ENCODE measurements at regions of chr10 and their contacts with region 1.

Region 1: GRCh38 chr10:17228091-17228940 is at the start of gene VIM:
- DNase-seq: peak; percentile 66 to 95 (median 86)
- ATAC-seq: peak; percentile 26
- H3K4me3 ChIP-seq: peak within 1 kb of the TSS; percentile 94
- H3K4me3 Mint-ChIP-seq: peak within 1 kb of the TSS; percentile 86
- H3K27ac ChIP-seq: peak within 1 kb of the TSS; percentile 93 to 100
- H3K27ac Mint-ChIP-seq: peak within 1 kb of the TSS; percentile 98
- H3K4me1 ChIP-seq: peaks cover 42% of the 10 kb centered on the region
- H3K4me1 Mint-ChIP-seq: peaks cover 61% of the 10 kb centered on the region
- H3K27me3 ChIP-seq: no peaks in the 10 kb centered on the region
- H3K27me3 Mint-ChIP-seq: no peaks in the 10 kb centered on the region
- CTCF ChIP-seq: no peak
- total RNA-seq, gene VIM: 1,576 to 1,603 TPM

Region 2: DNA sequence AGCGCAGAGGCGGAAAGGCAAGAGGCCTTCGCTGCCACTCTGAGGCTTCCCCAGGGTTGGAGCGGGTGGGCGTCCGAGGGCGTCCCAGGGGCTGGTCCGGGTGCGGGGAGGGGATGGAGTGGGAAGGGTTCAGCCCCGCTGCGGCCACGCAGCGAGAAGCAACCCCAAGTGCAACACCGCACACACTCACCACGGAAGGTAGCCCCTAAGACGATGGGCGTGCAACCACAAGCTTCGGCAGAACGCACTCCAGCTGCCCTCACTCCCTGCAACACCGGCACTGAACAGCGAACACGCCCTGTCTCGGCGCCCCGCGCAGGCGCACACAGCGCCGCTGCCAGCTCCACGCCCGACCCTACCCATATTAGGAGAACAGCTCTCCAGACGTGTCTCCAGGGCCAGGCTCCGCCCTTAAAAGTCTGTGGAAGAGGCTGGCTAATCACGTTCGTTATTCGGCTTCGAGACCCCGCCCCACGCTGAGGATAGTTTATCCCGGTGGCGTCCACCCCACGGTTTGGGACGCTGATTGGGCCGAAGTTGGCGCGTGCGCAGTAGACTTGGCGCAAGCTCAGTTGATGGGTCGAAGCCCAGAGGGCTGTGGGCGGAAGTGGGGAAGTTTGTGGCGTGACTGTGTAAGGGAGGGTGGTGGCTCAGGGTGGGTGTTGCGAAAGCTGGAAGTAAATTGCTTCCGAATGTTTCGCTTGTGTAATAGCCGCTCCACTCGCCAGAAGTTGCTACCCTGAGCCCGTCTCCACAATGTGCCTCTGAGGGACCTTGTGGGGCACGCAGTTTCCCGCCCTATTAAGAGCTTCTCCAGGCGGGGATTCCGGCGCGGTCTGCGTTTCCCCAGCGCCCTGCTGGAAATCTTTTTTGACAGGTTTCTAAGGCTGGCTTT is 410.9 kb before region 1 on chr10 and contains the start of gene RSU1:
- CTCF ChIA-PET with region 1: no interaction called
- POLR2A ChIA-PET with region 1: interaction called, 57 read pairs
- intact Hi-C with region 1: loop called in 1 of 2 experiments (anchors 5 kb)
- DNase-seq: peak; percentile 99 to 100 (median 100)
- ATAC-seq: peak; percentile 96
- H3K4me3 ChIP-seq: peak within 1 kb of the TSS; percentile 78
- H3K4me3 Mint-ChIP-seq: peak within 1 kb of the TSS; percentile 97
- H3K27ac ChIP-seq: peak within 1 kb of the TSS; percentile 82 to 87
- H3K27ac Mint-ChIP-seq: peak within 1 kb of the TSS; percentile 92
- H3K4me1 ChIP-seq: peaks cover 32% of the 10 kb centered on the region
- H3K4me1 Mint-ChIP-seq: peaks cover 50% of the 10 kb centered on the region
- H3K27me3 ChIP-seq: no peaks in the 10 kb centered on the region
- H3K27me3 Mint-ChIP-seq: no peaks in the 10 kb centered on the region
- CTCF ChIP-seq: no peak
- total RNA-seq, gene RSU1: 26.2 to 28.8 TPM

Region 3: GRCh38 chr10:16995867-16996529 is 232.3 kb before region 1 on chr10:
- CTCF ChIA-PET with region 1: interaction called, 4 read pairs
- POLR2A ChIA-PET with region 1: interaction called, 13 read pairs
- intact Hi-C with region 1: no loop called
- DNase-seq: peak in 4 of 14 experiments; percentile 8 to 71 (median 39)
- ATAC-seq: peak; percentile 80
- H3K4me3 ChIP-seq: no peak overlapping the region
- H3K4me3 Mint-ChIP-seq: peak overlapping the region; percentile 5
- H3K27ac ChIP-seq: no peak overlapping the region
- H3K27ac Mint-ChIP-seq: peak overlapping the region; percentile 88
- H3K4me1 ChIP-seq: peaks cover 10% of the 10 kb centered on the region
- H3K4me1 Mint-ChIP-seq: peaks cover 24% of the 10 kb centered on the region
- H3K27me3 ChIP-seq: no peaks in the 10 kb centered on the region
- H3K27me3 Mint-ChIP-seq: no peaks in the 10 kb centered on the region
- CTCF ChIP-seq: no peak

Region 4: DNA sequence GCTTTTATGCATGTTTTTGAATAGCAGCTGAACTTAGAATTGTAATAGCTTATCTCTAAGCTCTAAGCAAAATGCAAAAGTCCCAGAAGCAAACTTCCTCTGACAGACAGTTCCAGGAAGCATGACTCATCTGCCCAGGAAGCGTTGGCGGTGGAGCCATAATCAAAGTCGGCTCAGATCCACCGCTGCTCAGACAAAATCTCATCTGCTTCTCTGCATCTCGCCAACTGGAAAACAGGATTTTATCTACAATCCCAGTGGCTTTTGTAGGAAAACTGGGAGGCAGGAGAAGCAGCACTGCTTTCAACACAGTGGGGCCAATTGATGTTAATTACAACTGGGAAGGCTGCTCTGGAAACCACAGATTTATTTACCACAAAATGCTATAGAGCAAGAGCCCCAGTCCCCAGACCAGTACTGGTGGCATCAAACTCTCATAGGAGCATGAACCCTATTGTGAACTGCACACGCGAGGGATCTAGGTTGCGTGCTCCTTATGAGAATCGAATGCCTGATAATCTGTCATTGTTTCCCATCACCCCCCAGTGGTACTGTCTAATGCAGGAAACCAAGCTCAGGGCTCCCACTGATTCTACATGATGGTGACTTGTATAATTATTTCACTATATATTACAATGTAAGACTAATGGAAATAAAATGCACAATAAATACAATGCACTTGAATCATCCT is 198.6 kb before region 1 on chr10:
- CTCF ChIA-PET with region 1: interaction called, 3 read pairs
- POLR2A ChIA-PET with region 1: interaction called, 22 read pairs
- intact Hi-C with region 1: loop called in 1 of 2 experiments (anchors 5 kb)
- DNase-seq: peak; percentile 53 to 91 (median 68)
- ATAC-seq: peak; percentile 65
- H3K4me3 ChIP-seq: peak overlapping the region; percentile 52
- H3K4me3 Mint-ChIP-seq: peak overlapping the region; percentile 76
- H3K27ac ChIP-seq: peak overlapping the region; percentile 81 to 82
- H3K27ac Mint-ChIP-seq: peak overlapping the region; percentile 88
- H3K4me1 ChIP-seq: peaks cover 65% of the 10 kb centered on the region
- H3K4me1 Mint-ChIP-seq: peaks cover 84% of the 10 kb centered on the region
- H3K27me3 ChIP-seq: no peaks in the 10 kb centered on the region
- H3K27me3 Mint-ChIP-seq: no peaks in the 10 kb centered on the region
- CTCF ChIP-seq: no peak

Region 5: GRCh38 chr10:17113889-17114540 is 114.3 kb before region 1 on chr10:
- CTCF ChIA-PET with region 1: no interaction called
- POLR2A ChIA-PET with region 1: no interaction called
- intact Hi-C with region 1: no loop called
- DNase-seq: peak in 1 of 14 experiments; percentile 10
- ATAC-seq: no peak
- H3K4me3 ChIP-seq: no peak overlapping the region
- H3K4me3 Mint-ChIP-seq: no peak overlapping the region
- H3K27ac ChIP-seq: no peak overlapping the region
- H3K27ac Mint-ChIP-seq: no peak overlapping the region
- H3K4me1 ChIP-seq: peaks cover 5% of the 10 kb centered on the region
- H3K4me1 Mint-ChIP-seq: peaks cover 16% of the 10 kb centered on the region
- H3K27me3 ChIP-seq: no peaks in the 10 kb centered on the region
- H3K27me3 Mint-ChIP-seq: no peaks in the 10 kb centered on the region
- CTCF ChIP-seq: no peak

Region 6: DNA sequence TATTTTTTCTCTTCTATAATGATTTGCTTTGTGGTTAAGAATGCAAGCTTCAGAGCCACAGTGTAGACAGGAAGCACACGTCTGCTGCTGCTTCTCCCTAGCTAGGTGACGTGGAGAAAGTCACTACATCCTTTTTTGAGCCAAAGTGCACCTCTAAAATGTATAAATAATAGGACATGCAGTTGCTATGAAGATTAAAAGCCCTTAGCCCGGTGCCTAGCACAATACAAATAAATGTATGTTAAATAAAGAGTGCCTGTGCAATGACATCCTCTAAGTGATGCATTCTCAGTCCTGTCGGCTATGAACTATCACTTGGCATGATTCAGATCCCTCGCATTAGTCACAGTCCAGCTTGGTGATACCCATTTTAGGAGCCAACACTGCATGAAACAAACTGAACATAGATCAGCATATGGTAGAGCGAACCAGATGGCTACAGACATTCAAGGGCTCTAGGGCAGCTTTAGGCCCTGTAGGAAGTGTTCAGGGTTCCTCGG is 22.1 kb before region 1 on chr10:
- CTCF ChIA-PET with region 1: interaction called, 47 read pairs
- POLR2A ChIA-PET with region 1: interaction called, 375 read pairs
- intact Hi-C with region 1: loop called (anchors 1 kb)
- DNase-seq: peak in 12 of 14 experiments; percentile 15 to 90 (median 34)
- ATAC-seq: peak; percentile 75
- H3K4me3 ChIP-seq: no peak overlapping the region
- H3K4me3 Mint-ChIP-seq: peak overlapping the region; percentile 47
- H3K27ac ChIP-seq: peak overlapping the region; percentile 72 to 84
- H3K27ac Mint-ChIP-seq: peak overlapping the region; percentile 96
- H3K4me1 ChIP-seq: peaks cover 23% of the 10 kb centered on the region
- H3K4me1 Mint-ChIP-seq: peaks cover 41% of the 10 kb centered on the region
- H3K27me3 ChIP-seq: no peaks in the 10 kb centered on the region
- H3K27me3 Mint-ChIP-seq: no peaks in the 10 kb centered on the region
- CTCF ChIP-seq: no peak

Region 7: GRCh38 chr10:17425584-17426262 is 197.4 kb after region 1 on chr10:
- CTCF ChIA-PET with region 1: no interaction called
- POLR2A ChIA-PET with region 1: interaction called, 25 read pairs
- intact Hi-C with region 1: no loop called
- DNase-seq: peak; percentile 16 to 79 (median 55)
- ATAC-seq: peak; percentile 77
- H3K4me3 ChIP-seq: no peak overlapping the region
- H3K4me3 Mint-ChIP-seq: peak overlapping the region; percentile 43
- H3K27ac ChIP-seq: peak overlapping the region; percentile 44 to 67
- H3K27ac Mint-ChIP-seq: peak overlapping the region; percentile 93
- H3K4me1 ChIP-seq: peaks cover 67% of the 10 kb centered on the region
- H3K4me1 Mint-ChIP-seq: peaks cover 86% of the 10 kb centered on the region
- H3K27me3 ChIP-seq: no peaks in the 10 kb centered on the region
- H3K27me3 Mint-ChIP-seq: no peaks in the 10 kb centered on the region
- CTCF ChIP-seq: no peak

Measured in CD4-positive, alpha-beta T cell (primary cell).